ENCODE measurements at regions of chr7 and their contacts with region 1.

Region 1: DNA sequence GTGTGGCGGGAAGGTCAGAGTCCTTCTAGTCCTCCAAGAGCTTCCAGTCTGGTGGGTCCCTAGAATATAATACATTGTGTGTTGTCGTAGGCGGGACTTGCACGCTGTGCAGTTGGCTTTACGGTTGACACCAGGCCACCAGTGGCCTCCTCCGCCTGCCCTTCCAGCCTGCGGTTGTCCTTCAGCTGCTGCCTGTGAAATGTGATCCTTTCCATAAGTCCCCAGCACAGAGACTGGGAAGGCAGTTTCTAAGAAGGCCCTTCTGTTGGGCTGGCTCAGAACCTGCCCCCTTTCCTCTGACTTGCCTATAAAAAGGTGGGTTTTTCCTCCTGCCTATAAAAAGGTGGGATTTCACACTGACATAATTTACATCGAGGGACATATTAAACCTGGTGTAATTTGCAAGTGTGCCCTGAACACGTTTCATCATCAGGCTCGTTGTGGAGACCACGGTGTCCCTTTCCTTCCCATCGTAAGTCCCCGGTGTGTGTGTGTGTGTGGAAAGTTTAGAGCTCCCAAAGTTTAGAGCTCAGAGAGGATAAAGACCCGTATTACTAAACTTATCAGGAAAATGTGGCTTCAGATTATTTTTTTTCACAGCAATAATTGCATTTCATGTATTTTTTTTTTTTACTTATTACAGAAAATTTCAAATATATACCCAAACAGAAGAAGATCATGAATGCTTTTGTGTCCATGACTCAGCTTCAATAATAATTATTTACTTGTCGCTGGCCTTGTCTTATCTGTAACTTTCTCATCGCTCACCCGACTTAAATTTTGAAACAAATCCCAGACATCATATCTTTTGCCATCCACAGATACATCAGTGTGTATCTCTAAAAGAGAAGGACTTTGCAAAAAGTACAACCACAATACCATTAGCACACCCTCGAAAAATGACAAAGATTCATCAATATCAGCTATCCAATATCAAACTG is 45.1 kb downstream of the CUX1 start:
- DNase-seq: peak; percentile 68 to 93 (median 74)
- ATAC-seq: peak; percentile 97
- H3K4me3 ChIP-seq: peak overlapping the region; percentile 2; the same call in 1 of the 2 replicates
- H3K27ac ChIP-seq: peak overlapping the region; percentile 84
- H3K4me1 ChIP-seq: peaks cover 26 to 48% of the 10 kb centered on the region in 2 experiments
- H3K27me3 ChIP-seq: no peaks in the 10 kb centered on the region
- CTCF ChIP-seq: no peak
- EP300 ChIP-seq: no peak
- POLR2A ChIP-seq: peak; percentile 38; the same call in 1 of the 2 replicates
- RAD21 ChIP-seq: peak in 1 of 2 experiments; percentile 16; a peak in 2 of 4 replicates

Region 2: DNA sequence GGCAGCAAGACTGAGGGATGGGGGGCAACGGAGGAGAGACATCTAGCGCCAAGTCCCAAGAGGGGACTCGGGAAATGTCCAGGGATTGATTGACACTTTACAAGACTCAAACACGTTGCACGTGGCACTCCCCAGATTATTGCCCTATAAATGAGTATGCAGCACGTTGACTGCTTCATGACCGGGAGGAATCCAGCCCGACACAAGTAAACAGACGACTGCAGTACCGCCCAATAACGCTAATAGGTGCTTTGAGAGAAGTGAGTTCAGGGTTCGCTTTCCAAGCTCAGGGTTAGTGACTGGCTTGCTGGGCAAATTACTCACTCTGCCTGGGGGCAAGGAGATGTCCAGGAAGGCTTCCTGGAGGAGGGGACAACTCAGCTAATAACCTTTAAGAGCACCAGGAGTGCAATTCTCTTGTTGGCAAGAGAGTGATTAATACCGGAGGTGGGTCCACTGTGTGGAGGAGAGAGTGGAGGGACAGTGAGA is 160.1 kb before region 1 on chr7:
- CTCF ChIA-PET with region 1: no interaction called
- POLR2A ChIA-PET with region 1: no interaction called
- in situ Hi-C with region 1: no loop called
- intact Hi-C with region 1: no loop called
- DNase-seq: peak in 2 of 4 experiments; percentile 39 to 41
- ATAC-seq: peak; percentile 79
- H3K4me3 ChIP-seq: no peak overlapping the region
- H3K27ac ChIP-seq: no peak overlapping the region
- H3K4me1 ChIP-seq: peaks cover 0 to 7% of the 10 kb centered on the region in 2 experiments; a peak in 2 of 5 replicates
- H3K27me3 ChIP-seq: peaks cover 39 to 66% of the 10 kb centered on the region in 2 experiments
- CTCF ChIP-seq: peak in 2 of 3 experiments; percentile 19 to 26; a peak in 4 of 6 replicates
- EP300 ChIP-seq: no peak
- POLR2A ChIP-seq: no peak
- RAD21 ChIP-seq: no peak; a peak in 1 of 4 replicates

Region 3: DNA sequence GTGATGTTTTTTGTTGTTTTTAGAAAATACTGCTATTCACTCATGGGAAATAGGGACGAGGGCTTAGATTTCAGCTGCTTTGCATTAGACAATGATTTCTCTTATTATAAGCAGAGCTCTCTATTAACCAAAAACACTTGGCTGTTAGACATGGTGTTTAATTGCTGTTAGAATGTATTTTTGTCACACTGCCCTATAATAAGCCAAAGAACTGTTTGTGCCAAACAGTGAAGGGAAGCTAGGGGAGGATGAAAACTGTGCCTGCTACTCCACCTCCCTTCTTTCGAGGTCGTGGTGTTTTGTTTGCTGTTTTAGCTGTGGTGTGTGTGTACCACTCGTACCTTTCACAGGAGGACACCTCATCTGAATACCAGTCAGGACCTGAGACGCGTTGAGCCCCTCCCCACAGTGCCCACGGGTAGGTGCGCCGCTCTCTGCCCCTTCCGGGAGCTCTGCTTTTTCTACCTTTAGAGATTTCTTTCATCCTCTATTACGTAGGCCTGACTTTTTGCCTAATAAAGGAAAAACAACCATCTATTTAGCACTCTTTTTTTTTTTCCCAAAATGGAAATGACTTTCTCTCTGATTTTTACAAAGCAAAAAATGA is 12.8 kb after region 1 on chr7:
- CTCF ChIA-PET with region 1: no interaction called
- POLR2A ChIA-PET with region 1: interaction called, 10 read pairs
- in situ Hi-C with region 1: no loop called
- intact Hi-C with region 1: no loop called
- DNase-seq: no peak
- ATAC-seq: no peak
- H3K4me3 ChIP-seq: no peak overlapping the region
- H3K27ac ChIP-seq: no peak overlapping the region
- H3K4me1 ChIP-seq: peaks cover 16 to 17% of the 10 kb centered on the region in 2 experiments; a peak in 4 of 5 replicates
- H3K27me3 ChIP-seq: no peaks in the 10 kb centered on the region
- CTCF ChIP-seq: no peak
- EP300 ChIP-seq: no peak
- POLR2A ChIP-seq: no peak
- RAD21 ChIP-seq: no peak

Region 4: DNA sequence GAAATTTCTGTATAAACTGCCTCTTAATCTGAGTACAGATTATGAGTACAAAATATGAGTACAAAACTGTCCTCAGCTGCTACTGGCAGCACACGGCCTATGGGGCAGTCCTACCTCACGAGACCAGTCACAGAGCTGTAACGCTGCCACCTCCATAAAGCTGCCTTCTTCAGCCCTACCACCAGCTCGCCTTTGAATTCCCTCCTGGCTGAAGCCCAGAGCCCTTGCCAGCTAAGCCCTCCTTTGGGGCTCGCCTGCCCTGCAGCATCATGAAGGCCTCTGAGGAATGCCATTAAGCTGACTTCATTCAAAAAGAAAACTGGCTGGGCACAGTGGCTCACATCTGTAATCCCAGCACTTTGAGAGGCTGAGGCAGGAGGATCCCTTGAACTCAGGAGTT is 244.1 kb after region 1 on chr7:
- CTCF ChIA-PET with region 1: no interaction called
- POLR2A ChIA-PET with region 1: no interaction called
- in situ Hi-C with region 1: no loop called
- intact Hi-C with region 1: no loop called
- DNase-seq: peak in 1 of 4 experiments; percentile 4
- ATAC-seq: no peak
- H3K4me3 ChIP-seq: no peak overlapping the region
- H3K27ac ChIP-seq: no peak overlapping the region
- H3K4me1 ChIP-seq: peaks cover 0 to 7% of the 10 kb centered on the region in 2 experiments; a peak in 1 of 5 replicates
- H3K27me3 ChIP-seq: no peaks in the 10 kb centered on the region
- CTCF ChIP-seq: no peak
- EP300 ChIP-seq: no peak
- POLR2A ChIP-seq: no peak
- RAD21 ChIP-seq: no peak